ENCODE measurements at regions of chr4 and their contacts with region 1.

Region 1: DNA sequence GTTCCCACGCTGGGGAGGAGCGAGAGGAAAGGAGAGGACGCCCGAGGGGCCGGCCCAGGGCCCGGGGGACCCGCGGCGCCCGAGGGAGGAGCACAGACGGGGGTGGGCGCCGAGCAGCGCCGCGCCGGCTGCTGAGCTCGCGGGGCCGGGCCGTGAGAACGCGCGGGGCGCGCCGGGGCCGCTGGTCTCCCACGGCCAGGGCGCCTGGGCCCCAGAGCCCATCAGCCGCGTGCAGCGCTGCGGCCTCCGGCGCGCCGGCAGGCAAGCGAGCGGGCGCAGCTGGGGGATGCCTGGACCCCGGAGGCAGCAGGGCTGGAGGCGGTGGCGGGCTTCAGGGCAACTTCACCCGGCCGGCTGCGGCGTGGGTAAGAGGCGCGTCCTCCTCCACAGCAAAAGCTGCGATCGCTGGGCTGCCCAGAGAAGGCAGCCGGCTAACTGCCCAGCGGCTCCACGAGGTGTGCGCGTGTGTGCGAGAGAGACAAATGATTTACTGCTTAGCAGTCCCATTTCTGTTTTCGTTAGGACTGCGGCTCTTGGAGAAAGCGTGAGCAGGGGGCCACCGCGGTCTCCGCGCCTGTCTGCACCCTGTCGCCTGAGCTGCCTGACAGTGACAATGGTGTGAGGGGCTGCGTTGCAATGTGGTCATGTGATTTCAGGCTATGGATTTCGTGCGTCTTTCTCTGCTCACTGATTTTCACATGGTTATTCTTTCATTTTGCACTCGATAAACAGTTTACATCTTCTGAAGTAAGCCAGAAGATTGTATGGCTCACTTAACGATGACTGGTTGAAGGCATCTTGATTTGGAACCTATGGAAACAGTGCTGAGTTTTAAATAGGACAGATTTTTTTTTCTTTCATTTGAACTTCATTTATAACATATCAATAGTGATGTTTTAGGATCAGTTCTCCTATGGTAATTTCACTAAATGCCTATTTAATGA is 1.2 kb downstream of the GUCY1A1 start:
- DNase-seq: peak in 1 of 2 donors; percentile 33
- ATAC-seq: peak; percentile 72 to 93 (median 84)
- H3K4me3 ChIP-seq: peak overlapping the region; percentile 51 to 85 (median 74)
- H3K27ac ChIP-seq: peak overlapping the region; percentile 88 to 95 (median 92)
- H3K4me1 ChIP-seq: peaks cover 0 to 43% (median 17%) of the 10 kb centered on the region in 9 donors
- H3K27me3 ChIP-seq: peaks cover 0 to 31% (median 0%) of the 10 kb centered on the region in 7 donors
- CTCF ChIP-seq: no peak

Region 2: GRCh38 chr4:155442267-155443105 is 225.4 kb before region 1 on chr4:
- intact Hi-C with region 1: loop called in 8 of 10 experiments (anchors 2 to 10 kb)
- DNase-seq: peak; percentile 87
- ATAC-seq: peak; percentile 77 to 95 (median 94)
- H3K4me3 ChIP-seq: peak overlapping the region in 8 of 10 donors; percentile 6 to 44 (median 30)
- H3K27ac ChIP-seq: peak overlapping the region in 6 of 10 donors; percentile 24 to 65 (median 54)
- H3K4me1 ChIP-seq: peaks cover 0 to 13% (median 0%) of the 10 kb centered on the region in 9 donors
- H3K27me3 ChIP-seq: no peaks in the 10 kb centered on the region
- CTCF ChIP-seq: peak; percentile 90 to 99 (median 96)

Region 3: GRCh38 chr4:155529272-155529671 is 138.6 kb before region 1 on chr4:
- intact Hi-C with region 1: loop called in 3 of 10 experiments (anchors 10 kb)
- DNase-seq: no peak
- ATAC-seq: no peak
- H3K4me3 ChIP-seq: no peak overlapping the region
- H3K27ac ChIP-seq: no peak overlapping the region
- H3K4me1 ChIP-seq: peaks cover 6 to 43% (median 24%) of the 10 kb centered on the region in 9 donors
- H3K27me3 ChIP-seq: no peaks in the 10 kb centered on the region
- CTCF ChIP-seq: peak in 6 of 9 donors; percentile 9 to 42 (median 16)

Region 4: DNA sequence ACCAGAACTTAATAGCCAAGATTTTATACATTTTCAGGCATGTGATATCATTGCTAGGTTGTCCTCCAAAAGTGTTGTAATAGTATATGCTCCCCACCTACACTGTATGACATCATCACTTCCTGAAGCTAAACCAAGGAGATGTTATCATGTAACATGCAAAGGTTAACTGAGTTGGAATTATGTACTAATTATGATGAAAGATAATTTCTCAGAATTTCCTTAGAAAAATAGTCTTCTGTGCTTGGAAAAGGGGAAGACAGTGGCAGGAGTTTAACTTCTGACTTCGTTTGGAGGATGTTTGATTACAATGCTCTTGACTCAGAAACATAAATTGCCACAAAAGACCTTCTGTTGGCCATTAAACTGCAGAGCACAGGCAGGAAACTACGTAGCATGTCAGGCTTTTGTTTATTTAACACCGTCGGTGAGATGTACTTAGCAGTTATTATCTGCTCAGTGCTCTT is 84.8 kb before region 1 on chr4:
- intact Hi-C with region 1: loop called in 1 of 10 experiments (anchors 5 kb)
- DNase-seq: no peak
- ATAC-seq: peak in 5 of 8 donors; percentile 20 to 62 (median 52)
- H3K4me3 ChIP-seq: no peak overlapping the region
- H3K27ac ChIP-seq: peak overlapping the region in 3 of 10 donors; percentile 6 to 44 (median 14)
- H3K4me1 ChIP-seq: peaks cover 0 to 29% (median 20%) of the 10 kb centered on the region in 9 donors
- H3K27me3 ChIP-seq: no peaks in the 10 kb centered on the region
- CTCF ChIP-seq: no peak

Region 5: DNA sequence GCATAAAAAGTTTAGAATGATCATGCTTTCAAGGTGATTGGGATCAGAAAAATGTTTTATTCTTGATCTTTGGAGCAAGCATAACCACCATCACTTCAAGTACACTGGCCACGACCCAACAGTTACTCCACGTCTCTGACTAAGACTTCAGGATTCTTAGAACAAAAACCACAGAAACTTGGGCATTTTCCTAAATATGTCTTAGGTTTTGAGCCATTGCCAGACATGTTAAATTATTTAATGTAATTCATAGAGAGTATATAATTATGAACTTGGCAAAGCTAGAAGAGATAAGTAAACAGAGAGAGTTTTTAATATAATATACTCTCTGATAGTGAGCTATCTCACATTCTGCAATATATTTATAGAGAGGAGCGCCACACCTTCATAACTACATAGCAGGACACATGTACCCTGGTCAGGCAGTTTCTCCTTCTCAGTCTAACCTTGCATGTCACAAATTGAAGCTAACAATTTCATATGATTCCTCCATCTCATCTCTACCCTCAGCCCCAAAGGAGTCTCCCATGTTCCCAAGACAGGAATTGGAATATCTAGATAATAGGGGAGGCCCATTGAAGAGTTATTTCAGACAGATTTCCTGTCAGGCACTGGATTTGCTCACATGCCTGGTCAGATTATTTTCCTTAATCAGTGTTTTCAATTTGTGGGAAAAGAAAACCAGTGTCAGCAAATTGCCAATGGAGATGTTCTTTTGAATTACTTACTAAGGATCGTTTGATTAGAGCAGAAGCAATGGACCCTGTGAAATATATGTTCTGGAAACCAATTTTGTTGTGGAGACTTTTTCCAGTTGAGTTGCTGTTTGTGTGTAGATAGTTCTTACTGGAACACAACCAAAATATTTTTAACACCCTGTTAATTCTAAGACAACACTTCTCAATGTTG is 62.9 kb before region 1 on chr4:
- intact Hi-C with region 1: no loop called
- DNase-seq: peak in 1 of 2 donors; percentile 14
- ATAC-seq: no peak
- H3K4me3 ChIP-seq: no peak overlapping the region
- H3K27ac ChIP-seq: no peak overlapping the region
- H3K4me1 ChIP-seq: peaks cover 0 to 28% (median 9%) of the 10 kb centered on the region in 9 donors
- H3K27me3 ChIP-seq: no peaks in the 10 kb centered on the region
- CTCF ChIP-seq: no peak

Region 6: DNA sequence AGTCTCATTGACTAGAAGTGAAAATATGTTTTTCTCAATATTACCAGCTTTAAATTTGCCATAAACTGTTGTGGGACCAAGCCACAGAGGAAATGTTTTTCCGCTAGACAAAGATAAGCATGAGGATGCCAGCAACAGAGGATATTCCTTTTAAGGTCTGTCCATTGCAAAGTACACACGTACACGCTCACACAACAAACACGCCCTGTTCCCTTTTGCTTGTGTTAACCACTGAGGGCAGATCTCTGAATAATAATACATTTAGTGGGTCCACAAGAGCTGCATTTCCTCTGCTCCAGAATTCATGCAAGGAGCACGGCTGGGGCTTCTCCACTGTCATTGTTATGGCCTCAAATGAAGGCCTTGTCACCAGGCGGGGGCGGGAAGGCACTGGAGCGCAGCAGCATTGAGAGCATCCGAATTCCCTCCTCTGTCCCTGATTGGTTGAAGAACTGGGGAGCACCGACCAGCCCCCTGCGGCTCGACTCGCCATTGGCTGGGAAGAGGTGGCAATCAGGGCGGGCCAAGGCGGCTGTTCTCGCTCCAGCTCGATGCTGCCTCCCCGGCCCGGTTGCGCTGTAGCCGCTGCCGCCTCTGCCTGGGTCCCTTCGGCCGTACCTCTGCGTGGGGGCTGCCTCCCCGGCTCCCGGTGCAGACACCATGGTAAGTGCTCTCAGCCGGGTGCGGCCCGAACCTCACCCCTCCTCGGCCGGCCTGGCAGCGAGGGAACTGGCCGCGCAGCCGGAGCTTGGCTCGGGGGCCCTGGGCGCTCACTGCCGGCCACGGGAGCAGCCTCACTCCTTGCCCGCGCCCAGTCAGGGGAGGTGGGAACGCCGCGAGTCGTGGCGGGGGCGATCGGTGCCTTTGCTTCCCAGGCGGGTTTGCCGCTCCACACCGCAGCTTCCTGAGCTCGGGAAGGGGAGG is 90.9 kb after region 1 on chr4 and contains the start of gene GUCY1B1:
- intact Hi-C with region 1: loop called in 4 of 10 experiments (anchors 2 to 10 kb)
- DNase-seq: peak; percentile 95 to 97
- ATAC-seq: peak; percentile 96 to 99 (median 98)
- H3K4me3 ChIP-seq: peak within 1 kb of the TSS; percentile 70 to 90 (median 78)
- H3K27ac ChIP-seq: peak within 1 kb of the TSS; percentile 84 to 96 (median 92)
- H3K4me1 ChIP-seq: peaks cover 0 to 31% (median 12%) of the 10 kb centered on the region in 9 donors
- H3K27me3 ChIP-seq: peaks cover 0 to 19% (median 0%) of the 10 kb centered on the region in 7 donors
- CTCF ChIP-seq: peak; percentile 28 to 76 (median 57)
- total RNA-seq, gene GUCY1B1: 10.7 to 29.9 (median 17.1) TPM

Region 7: DNA sequence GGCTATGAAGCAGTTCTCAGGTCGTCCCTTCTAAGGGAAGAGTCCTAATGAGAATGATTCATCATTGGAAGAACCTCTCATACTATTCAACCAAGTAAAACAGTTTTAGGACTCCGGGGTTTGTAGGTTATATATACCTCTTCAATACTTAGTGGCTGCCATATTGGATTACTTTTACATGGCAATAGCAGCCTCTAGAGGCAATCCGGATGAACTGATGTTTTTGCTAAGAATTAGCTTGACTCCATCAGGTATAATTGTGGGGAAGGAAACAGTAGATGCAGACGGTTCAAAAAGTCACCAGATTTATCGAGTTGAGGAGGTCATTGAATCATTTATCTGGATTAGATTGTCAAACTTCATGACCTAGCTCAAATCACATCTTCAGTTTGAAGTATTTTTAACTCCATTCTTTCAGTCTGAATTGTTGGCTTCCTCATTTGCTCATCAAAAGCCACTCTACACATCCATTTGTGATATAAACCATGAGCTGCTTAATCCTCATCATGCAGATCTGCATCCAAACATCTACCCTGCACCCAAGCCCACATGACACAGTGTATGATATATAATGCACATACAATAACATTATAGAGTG is 119.4 kb after region 1 on chr4:
- intact Hi-C with region 1: loop called in 2 of 10 experiments (anchors 10 kb)
- DNase-seq: no peak
- ATAC-seq: peak; percentile 73 to 91 (median 87)
- H3K4me3 ChIP-seq: no peak overlapping the region
- H3K27ac ChIP-seq: no peak overlapping the region
- H3K4me1 ChIP-seq: peaks cover 0 to 57% (median 7%) of the 10 kb centered on the region in 9 donors
- H3K27me3 ChIP-seq: no peaks in the 10 kb centered on the region
- CTCF ChIP-seq: peak; percentile 51 to 90 (median 73)